Naive thymus-derived CD4-positive, alpha-beta T cell (primary cell): ENCODE measurements at regions of chr7 and their contacts with region 1.

Region 1: GRCh38 chr7:149866779-149867447 is 6.9 kb upstream of the ATP6V0E2 start:
- DNase-seq: no peak
- ATAC-seq: no peak
- H3K4me3 ChIP-seq: peak overlapping the region; percentile 10
- H3K4me3 Mint-ChIP-seq: peak overlapping the region; percentile 47 to 90 (median 76)
- H3K27ac ChIP-seq: peak overlapping the region; percentile 88
- H3K27ac Mint-ChIP-seq: peak overlapping the region; percentile 88 to 99 (median 97)
- H3K4me1 ChIP-seq: peaks cover 82 to 100% of the 10 kb centered on the region in 2 donors
- H3K4me1 Mint-ChIP-seq: peaks cover 57 to 98% (median 91%) of the 10 kb centered on the region in 7 donors
- H3K27me3 ChIP-seq: no peaks in the 10 kb centered on the region
- H3K27me3 Mint-ChIP-seq: no peaks in the 10 kb centered on the region

Region 2: DNA sequence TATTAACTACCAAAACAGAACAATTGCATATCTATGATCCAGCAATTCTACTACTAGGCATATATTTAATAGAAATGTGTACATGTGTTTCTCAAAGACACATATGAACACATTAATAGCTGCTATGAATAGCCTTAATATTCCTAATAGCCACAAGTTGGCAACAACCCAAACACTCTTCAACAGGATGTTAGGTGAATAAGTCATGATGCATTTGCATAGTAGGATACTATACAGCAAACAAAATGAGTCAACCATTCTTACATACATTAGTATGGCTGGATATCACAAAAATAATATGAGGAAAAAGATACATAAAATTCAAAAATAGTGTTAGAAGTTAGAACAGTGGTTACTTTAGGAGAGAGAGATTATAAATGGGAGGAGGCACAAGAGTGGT is 342.5 kb before region 1 on chr7:
- CTCF ChIA-PET with region 1: no interaction called
- POLR2A ChIA-PET with region 1: no interaction called
- intact Hi-C with region 1: no loop called
- DNase-seq: no peak
- ATAC-seq: no peak
- H3K4me3 ChIP-seq: no peak overlapping the region
- H3K4me3 Mint-ChIP-seq: no peak overlapping the region
- H3K27ac ChIP-seq: no peak overlapping the region
- H3K27ac Mint-ChIP-seq: no peak overlapping the region
- H3K4me1 ChIP-seq: no peaks in the 10 kb centered on the region
- H3K4me1 Mint-ChIP-seq: no peaks in the 10 kb centered on the region
- H3K27me3 ChIP-seq: no peaks in the 10 kb centered on the region
- H3K27me3 Mint-ChIP-seq: peaks cover 0 to 15% (median 4%) of the 10 kb centered on the region in 5 donors

Region 3: GRCh38 chr7:149811221-149811620 is 55.7 kb before region 1 on chr7:
- CTCF ChIA-PET with region 1: interaction called, 3 read pairs
- POLR2A ChIA-PET with region 1: no interaction called
- intact Hi-C with region 1: loop called in 1 of 2 experiments (anchors 2 kb)
- DNase-seq: no peak
- ATAC-seq: no peak
- H3K4me3 ChIP-seq: no peak overlapping the region
- H3K4me3 Mint-ChIP-seq: no peak overlapping the region
- H3K27ac ChIP-seq: no peak overlapping the region
- H3K27ac Mint-ChIP-seq: no peak overlapping the region
- H3K4me1 ChIP-seq: no peaks in the 10 kb centered on the region
- H3K4me1 Mint-ChIP-seq: peaks cover 0 to 11% (median 7%) of the 10 kb centered on the region in 7 donors
- H3K27me3 ChIP-seq: no peaks in the 10 kb centered on the region
- H3K27me3 Mint-ChIP-seq: no peaks in the 10 kb centered on the region

Region 4: DNA sequence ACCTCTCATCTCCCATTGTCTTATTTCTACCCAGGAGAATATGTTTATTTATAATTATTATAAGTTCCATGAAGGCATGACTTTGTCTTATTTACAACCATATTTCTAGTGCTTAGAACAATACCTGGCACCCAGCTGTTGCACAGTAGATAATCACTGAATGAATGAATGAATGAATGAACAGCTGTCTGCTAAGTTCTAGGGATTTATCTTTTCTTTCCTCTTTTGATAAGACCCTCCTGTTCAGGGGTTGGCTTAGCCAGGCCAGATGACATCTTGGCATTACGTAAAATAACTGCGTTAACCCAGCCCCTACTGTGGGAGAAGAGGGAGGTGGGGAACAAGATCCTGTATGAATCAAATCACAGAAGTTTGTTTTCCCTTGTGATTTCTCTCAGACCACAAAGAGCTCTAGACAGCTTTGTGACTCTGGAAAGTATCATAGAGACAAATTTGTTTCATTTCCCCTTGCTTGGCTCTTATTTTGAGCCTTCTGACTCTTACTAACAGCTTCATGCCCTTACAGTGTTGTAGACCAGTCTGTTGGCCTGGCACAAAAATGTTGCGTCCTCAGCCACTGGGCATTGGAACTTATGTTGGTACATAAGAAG is 20.4 kb before region 1 on chr7:
- CTCF ChIA-PET with region 1: interaction called, 3 read pairs
- POLR2A ChIA-PET with region 1: interaction called, 44 read pairs
- intact Hi-C with region 1: no loop called
- DNase-seq: no peak
- ATAC-seq: no peak
- H3K4me3 ChIP-seq: no peak overlapping the region
- H3K4me3 Mint-ChIP-seq: peak overlapping the region in 2 of 10 donors; percentile 11 to 27
- H3K27ac ChIP-seq: no peak overlapping the region
- H3K27ac Mint-ChIP-seq: peak overlapping the region in 8 of 9 donors; percentile 11 to 81 (median 71)
- H3K4me1 ChIP-seq: peaks cover 0 to 49% of the 10 kb centered on the region in 2 donors
- H3K4me1 Mint-ChIP-seq: peaks cover 16 to 83% (median 68%) of the 10 kb centered on the region in 7 donors
- H3K27me3 ChIP-seq: no peaks in the 10 kb centered on the region
- H3K27me3 Mint-ChIP-seq: no peaks in the 10 kb centered on the region

Region 5: DNA sequence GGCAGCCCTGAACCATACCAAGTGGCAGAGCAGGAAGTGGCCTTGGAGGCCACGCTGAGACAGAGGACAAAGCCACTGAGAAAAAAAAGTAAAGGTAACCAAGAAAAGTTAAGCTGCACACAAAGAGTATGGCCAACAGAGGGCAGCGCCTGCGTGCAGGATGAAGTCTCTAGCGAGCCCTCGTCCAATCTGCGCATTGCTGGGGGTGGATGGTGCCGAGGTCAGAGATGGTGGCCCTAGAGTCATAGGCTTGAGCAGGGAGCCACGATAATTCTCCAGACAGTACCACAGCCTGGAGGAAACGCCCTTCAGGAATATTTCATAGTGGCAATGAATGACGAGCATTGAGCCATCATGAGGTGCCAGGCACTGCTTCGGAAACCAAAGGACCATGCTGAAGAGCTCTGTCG is 16.5 kb after region 1 on chr7:
- CTCF ChIA-PET with region 1: interaction called, 32 read pairs
- POLR2A ChIA-PET with region 1: interaction called, 10 read pairs
- intact Hi-C with region 1: loop called in 1 of 2 experiments (anchors 1 kb)
- DNase-seq: peak in 4 of 9 donors; percentile 58 to 63 (median 60)
- ATAC-seq: peak; percentile 81
- H3K4me3 ChIP-seq: no peak overlapping the region
- H3K4me3 Mint-ChIP-seq: peak overlapping the region in 1 of 10 donors; percentile 38
- H3K27ac ChIP-seq: no peak overlapping the region
- H3K27ac Mint-ChIP-seq: peak overlapping the region in 6 of 9 donors; percentile 11 to 80 (median 62)
- H3K4me1 ChIP-seq: peaks cover 0 to 7% of the 10 kb centered on the region in 2 donors
- H3K4me1 Mint-ChIP-seq: peaks cover 5 to 26% (median 19%) of the 10 kb centered on the region in 7 donors
- H3K27me3 ChIP-seq: no peaks in the 10 kb centered on the region
- H3K27me3 Mint-ChIP-seq: no peaks in the 10 kb centered on the region